ENCODE measurements at regions of chr12 and their contacts with region 1.

Region 1: DNA sequence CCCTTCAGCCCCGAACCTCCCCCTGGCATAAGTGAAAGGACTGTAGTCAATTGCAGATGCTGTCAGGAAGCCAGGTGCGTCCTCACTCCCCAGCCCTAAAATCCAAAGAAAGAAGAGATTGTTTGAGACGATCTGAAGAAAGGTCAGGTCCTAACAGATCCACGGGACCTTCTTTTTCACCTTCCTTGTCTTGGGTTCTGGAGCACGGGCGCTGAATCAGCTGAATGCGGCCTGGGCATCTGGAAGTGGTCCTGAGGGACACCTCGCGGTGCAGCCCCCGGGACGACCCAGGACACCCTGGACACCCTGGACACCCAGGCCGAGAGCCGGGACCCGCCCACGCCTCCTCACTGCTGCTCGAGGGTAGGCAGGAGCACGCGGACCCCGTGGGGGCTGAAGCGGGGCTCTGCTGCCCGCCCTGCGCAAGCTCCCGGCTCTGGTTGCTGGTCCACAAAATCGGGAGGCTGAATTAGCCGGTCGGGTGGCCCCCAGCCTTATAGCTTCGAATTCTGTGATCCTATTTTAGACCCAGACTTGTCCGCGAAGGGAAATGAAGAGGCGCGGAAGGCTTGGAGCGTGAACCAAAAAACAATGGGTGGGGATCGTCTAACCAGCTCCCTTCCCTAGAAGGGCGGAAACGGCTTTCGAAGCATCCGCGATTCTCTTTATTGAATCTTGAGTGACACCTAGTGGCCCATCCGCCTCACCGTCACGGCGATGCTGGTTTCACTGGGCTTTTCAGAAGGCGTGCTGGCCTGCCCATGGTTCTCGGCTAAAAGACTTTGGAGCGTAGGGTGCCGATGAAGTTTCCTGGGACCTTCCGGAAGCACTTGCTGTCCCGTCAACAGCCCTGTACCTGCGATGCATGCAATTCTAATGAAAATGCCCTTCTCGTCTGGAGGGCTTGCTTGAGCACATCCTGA is 46.4 kb upstream of the PLXNC1 start:
- DNase-seq: peak; percentile 82 to 86 (median 83)
- H3K4me3 ChIP-seq: peak overlapping the region; percentile 54 to 82
- H3K4me3 Mint-ChIP-seq: peak overlapping the region; percentile 85 to 91 (median 88)
- H3K27ac ChIP-seq: peak overlapping the region; percentile 20
- H3K27ac Mint-ChIP-seq: peak overlapping the region; percentile 65 to 91 (median 72)
- H3K4me1 ChIP-seq: peaks cover 10% of the 10 kb centered on the region
- H3K4me1 Mint-ChIP-seq: peaks cover 5 to 21% (median 7%) of the 10 kb centered on the region in 4 donors
- H3K27me3 ChIP-seq: peaks cover 2% of the 10 kb centered on the region
- H3K27me3 Mint-ChIP-seq: peaks cover 10 to 11% of the 10 kb centered on the region in 2 donors

Region 2: GRCh38 chr12:92810370-92810769 is 1291.6 kb before region 1 on chr12:
- CTCF ChIA-PET with region 1: no interaction called
- POLR2A ChIA-PET with region 1: no interaction called
- intact Hi-C with region 1: no loop called
- DNase-seq: no peak
- H3K4me3 ChIP-seq: no peak overlapping the region
- H3K4me3 Mint-ChIP-seq: no peak overlapping the region
- H3K27ac ChIP-seq: no peak overlapping the region
- H3K27ac Mint-ChIP-seq: no peak overlapping the region
- H3K4me1 ChIP-seq: no peaks in the 10 kb centered on the region
- H3K4me1 Mint-ChIP-seq: peaks cover 0 to 1% (median 0%) of the 10 kb centered on the region in 4 donors
- H3K27me3 ChIP-seq: no peaks in the 10 kb centered on the region
- H3K27me3 Mint-ChIP-seq: no peaks in the 10 kb centered on the region

Region 3: GRCh38 chr12:93397412-93397811 is 704.6 kb before region 1 on chr12:
- CTCF ChIA-PET with region 1: interaction called, 19 read pairs
- POLR2A ChIA-PET with region 1: no interaction called
- intact Hi-C with region 1: no loop called
- DNase-seq: no peak
- H3K4me3 ChIP-seq: no peak overlapping the region
- H3K4me3 Mint-ChIP-seq: no peak overlapping the region
- H3K27ac ChIP-seq: no peak overlapping the region
- H3K27ac Mint-ChIP-seq: no peak overlapping the region
- H3K4me1 ChIP-seq: no peaks in the 10 kb centered on the region
- H3K4me1 Mint-ChIP-seq: peaks cover 0 to 7% (median 0%) of the 10 kb centered on the region in 4 donors
- H3K27me3 ChIP-seq: no peaks in the 10 kb centered on the region
- H3K27me3 Mint-ChIP-seq: no peaks in the 10 kb centered on the region

Region 4: DNA sequence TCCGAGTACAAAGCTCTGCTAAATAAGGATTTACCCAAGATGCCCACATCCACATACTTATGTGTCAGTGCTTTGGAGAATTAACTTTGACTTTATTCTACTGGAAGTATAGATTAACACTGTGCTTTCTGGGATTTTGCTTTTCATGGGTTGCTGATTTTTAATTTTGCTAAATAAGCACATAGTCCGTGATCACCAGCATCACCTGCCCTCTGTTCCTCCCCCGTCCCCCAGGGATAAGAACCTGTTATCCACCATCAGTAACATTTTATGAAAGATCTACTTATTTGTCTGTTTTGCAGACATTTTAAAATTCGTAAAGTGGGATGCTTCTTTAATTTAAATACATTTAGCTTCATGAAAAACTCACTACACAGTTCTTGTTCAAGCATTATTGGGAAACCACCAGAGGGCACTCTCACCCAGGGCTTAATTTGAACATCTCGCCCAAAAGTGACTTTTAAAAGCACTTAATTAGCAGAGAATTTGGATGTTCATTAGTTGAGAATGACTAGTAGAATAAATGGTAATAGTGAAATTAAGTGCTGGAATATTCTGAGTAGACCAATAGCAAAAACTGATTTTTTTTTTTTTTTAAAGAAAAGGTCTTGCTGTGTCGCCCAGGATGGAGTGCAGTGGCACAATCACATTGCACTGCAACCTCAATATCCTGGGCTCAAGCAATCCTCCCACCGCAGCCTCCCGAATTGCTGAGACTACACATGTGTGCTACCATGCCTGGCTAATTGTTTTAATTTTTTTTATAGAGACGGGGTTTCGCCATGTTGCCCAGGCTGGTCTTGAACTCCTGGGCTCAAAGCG is 599.0 kb before region 1 on chr12:
- CTCF ChIA-PET with region 1: interaction called, 480 read pairs
- POLR2A ChIA-PET with region 1: interaction called, 36 read pairs
- intact Hi-C with region 1: loop called (anchors 1 kb)
- DNase-seq: peak; percentile 53 to 65 (median 60)
- H3K4me3 ChIP-seq: no peak overlapping the region
- H3K4me3 Mint-ChIP-seq: no peak overlapping the region
- H3K27ac ChIP-seq: no peak overlapping the region
- H3K27ac Mint-ChIP-seq: peak overlapping the region in 2 of 7 donors; percentile 5 to 66
- H3K4me1 ChIP-seq: no peaks in the 10 kb centered on the region
- H3K4me1 Mint-ChIP-seq: peaks cover 0 to 6% (median 3%) of the 10 kb centered on the region in 4 donors
- H3K27me3 ChIP-seq: no peaks in the 10 kb centered on the region
- H3K27me3 Mint-ChIP-seq: no peaks in the 10 kb centered on the region

Region 5: GRCh38 chr12:93550748-93551611 is 551.0 kb before region 1 on chr12:
- CTCF ChIA-PET with region 1: interaction called, 10 read pairs
- POLR2A ChIA-PET with region 1: no interaction called
- intact Hi-C with region 1: no loop called
- DNase-seq: no peak
- H3K4me3 ChIP-seq: no peak overlapping the region
- H3K4me3 Mint-ChIP-seq: no peak overlapping the region
- H3K27ac ChIP-seq: no peak overlapping the region
- H3K27ac Mint-ChIP-seq: peak overlapping the region in 1 of 7 donors; percentile 18
- H3K4me1 ChIP-seq: no peaks in the 10 kb centered on the region
- H3K4me1 Mint-ChIP-seq: peaks cover 0 to 4% (median 0%) of the 10 kb centered on the region in 4 donors
- H3K27me3 ChIP-seq: no peaks in the 10 kb centered on the region
- H3K27me3 Mint-ChIP-seq: no peaks in the 10 kb centered on the region

Region 6: DNA sequence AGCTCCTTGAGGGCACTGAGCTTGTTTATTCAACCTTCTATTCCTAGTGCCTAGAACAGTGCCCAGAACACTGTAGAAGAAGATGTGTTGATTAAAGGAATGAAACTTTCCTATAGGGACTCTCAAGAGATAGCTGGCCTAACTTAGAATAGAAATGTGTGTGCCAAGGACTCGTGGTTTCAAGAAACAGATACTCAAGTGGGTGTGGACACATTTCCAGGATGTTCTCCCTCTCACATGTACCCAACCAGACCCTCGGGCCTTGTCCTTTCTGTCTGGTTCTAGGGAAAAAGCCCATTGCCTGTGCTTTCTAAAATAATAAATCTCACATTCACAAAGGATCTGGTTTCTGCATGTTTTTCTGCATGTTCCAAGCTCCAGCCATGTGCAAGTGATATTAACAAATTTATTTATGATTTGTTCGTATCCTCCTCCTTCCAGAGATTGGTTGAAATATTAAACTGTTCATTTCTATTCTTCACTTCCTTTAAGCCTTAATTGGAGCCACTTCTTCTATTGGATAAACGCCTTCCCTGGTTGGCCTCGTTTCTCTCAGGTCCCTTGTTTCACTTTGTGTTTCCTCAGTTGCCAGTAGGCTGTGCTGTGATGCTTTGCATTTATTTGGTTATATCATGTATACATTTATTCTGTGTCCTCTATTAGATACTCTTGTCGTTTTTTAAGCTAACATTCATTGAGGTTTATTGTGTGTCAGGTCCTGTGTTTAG is 335.0 kb before region 1 on chr12:
- CTCF ChIA-PET with region 1: interaction called, 158 read pairs
- POLR2A ChIA-PET with region 1: interaction called, 18 read pairs
- intact Hi-C with region 1: loop called (anchors 1 kb)
- DNase-seq: peak; percentile 33 to 58 (median 37)
- H3K4me3 ChIP-seq: no peak overlapping the region
- H3K4me3 Mint-ChIP-seq: peak overlapping the region in 5 of 8 donors; percentile 1 to 60 (median 21)
- H3K27ac ChIP-seq: no peak overlapping the region
- H3K27ac Mint-ChIP-seq: peak overlapping the region; percentile 2 to 83 (median 12)
- H3K4me1 ChIP-seq: peaks cover 23% of the 10 kb centered on the region
- H3K4me1 Mint-ChIP-seq: peaks cover 18 to 32% (median 24%) of the 10 kb centered on the region in 4 donors
- H3K27me3 ChIP-seq: no peaks in the 10 kb centered on the region
- H3K27me3 Mint-ChIP-seq: no peaks in the 10 kb centered on the region

Region 7: DNA sequence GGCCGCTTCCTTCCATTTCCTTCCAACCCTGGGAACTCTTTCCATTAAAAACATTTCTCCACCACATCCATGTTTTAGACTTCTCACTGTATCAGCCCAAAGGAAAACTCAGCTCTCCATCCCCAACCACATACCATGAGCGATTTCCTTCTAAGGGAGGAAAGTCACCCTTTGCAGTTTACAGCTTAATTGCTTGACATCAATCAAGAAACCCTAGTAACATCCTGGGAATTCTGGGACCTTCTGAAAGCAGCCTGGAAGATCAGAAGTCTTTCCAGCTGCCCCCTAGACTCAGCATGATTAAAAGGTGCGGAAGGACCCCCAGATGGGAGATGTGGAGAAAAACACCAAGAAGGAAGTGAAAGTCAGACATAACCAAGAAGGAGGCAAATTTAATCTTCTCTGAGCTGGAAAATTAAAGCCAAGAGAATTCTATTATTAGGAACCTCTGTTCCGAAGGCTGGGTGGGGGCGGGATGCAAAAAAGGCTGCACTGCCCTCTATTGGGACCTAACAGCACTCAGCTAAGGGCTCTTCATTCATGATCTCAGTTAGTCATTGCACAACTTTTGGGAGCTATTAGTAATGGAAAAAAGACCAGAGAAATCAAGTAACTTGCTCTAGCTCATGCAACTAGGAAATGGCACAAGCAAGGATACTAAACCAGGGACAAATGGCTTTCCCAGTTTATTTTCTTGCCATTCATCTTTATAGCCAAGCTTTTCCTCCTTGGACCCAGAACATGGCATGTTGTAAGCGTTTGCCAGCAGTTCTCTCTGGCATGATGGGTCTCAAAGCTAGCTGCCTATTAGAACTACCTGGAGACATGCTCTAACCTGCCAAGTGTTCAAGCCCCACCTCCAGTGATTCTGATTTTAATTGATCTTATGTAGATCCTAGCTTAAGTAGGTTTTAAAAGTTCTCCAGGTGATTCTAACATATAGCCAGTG is 26.7 kb before region 1 on chr12:
- CTCF ChIA-PET with region 1: interaction called, 68 read pairs
- POLR2A ChIA-PET with region 1: interaction called, 3 read pairs
- intact Hi-C with region 1: no loop called
- DNase-seq: no peak
- H3K4me3 ChIP-seq: no peak overlapping the region
- H3K4me3 Mint-ChIP-seq: no peak overlapping the region
- H3K27ac ChIP-seq: no peak overlapping the region
- H3K27ac Mint-ChIP-seq: no peak overlapping the region
- H3K4me1 ChIP-seq: no peaks in the 10 kb centered on the region
- H3K4me1 Mint-ChIP-seq: peaks cover 14 to 25% (median 20%) of the 10 kb centered on the region in 4 donors
- H3K27me3 ChIP-seq: no peaks in the 10 kb centered on the region
- H3K27me3 Mint-ChIP-seq: peaks cover 1 to 5% of the 10 kb centered on the region in 2 donors

Measured in CD4-positive, alpha-beta memory T cell (primary cell).